ENCODE measurements at regions of chr16 and their contacts with region 1.

Region 1: DNA sequence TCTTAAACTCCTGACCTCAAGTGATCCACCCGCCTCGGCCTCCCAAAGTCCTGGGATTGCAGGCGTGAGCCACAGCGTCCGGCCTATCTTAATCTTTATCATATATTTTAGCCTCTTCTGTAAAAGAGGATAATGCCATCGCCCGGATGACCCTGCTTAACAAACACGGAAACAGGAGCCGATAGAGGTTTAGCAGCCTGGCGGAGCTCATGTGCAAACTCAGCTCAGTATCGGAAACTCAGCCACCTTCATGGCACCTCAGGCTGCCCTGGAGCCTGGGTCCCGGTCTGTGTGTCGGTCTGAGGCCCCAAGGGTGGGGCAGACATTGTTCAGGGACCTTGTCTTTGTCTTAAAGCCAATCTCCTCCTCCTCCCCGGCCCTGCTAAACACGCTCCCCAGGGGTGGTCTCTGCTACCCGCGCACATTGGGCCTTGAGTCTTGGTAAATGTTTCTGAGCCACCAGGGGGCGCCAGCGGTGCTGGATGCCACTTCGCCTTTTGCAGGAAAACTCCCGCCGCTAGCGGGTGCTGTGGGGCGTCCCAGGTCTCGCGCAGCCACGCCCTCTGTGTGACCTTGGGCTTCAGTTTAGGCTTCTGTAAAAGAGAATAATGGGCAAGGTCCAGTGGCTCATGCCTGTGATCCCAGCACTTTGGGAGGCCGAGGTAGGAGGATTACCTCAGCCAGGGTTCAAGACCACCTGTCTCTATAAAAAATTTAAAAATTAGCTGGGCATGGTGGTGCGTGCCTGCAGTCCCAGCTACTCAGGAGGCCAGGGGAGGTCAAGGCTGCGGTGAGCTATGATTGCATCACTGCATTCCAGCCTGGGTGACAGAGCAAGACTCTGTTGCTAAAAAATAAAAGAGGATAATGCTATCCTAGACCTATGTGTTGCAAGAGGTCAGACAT is 2.7 kb downstream of the CETP start:
- DNase-seq: peak; percentile 96
- H3K4me3 Mint-ChIP-seq: no peak overlapping the region
- H3K27ac Mint-ChIP-seq: no peak overlapping the region
- H3K4me1 Mint-ChIP-seq: peaks cover 19% of the 10 kb centered on the region
- H3K27me3 Mint-ChIP-seq: no peaks in the 10 kb centered on the region

Region 2: GRCh38 chr16:56974549-56975300 is 10.2 kb after region 1 on chr16:
- CTCF ChIA-PET with region 1: interaction called, 24 read pairs
- POLR2A ChIA-PET with region 1: interaction called, 4 read pairs
- DNase-seq: no peak
- H3K4me3 Mint-ChIP-seq: no peak overlapping the region
- H3K27ac Mint-ChIP-seq: no peak overlapping the region
- H3K4me1 Mint-ChIP-seq: peaks cover 20% of the 10 kb centered on the region
- H3K27me3 Mint-ChIP-seq: no peaks in the 10 kb centered on the region

Region 3: DNA sequence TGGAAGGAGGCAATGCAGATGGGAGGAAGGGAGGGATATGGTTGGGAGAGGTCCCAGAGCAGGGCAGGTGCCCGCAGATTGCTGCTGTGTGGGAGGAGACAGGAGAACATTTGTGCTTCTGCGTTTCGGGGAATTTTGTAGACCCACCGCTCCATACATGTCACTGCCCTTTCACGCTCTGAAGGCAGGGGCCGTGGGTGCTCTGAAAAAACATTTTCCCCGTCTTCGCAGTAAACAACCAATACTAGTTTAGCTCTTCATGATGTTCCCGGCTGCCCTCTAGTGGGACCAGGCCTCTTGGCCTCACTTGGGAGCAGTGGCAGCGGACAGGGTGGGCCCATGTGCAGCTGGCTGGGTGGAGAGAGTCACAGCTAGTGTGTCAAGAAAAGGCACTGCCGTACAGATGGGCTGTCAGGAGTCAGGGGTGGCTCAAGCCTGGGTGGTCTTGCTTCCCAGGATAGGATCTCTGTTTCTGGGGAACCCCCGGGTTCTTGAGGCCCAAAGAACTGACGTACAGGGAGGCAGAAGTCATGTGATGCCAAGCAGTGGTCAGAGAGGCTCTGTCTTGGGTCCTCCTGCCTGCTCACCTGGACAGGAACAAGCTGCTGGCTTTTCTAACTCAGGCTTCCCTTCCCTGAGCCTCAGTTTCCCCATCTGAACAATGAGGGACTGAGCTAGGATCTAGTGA is 81.3 kb after region 1 on chr16:
- CTCF ChIA-PET with region 1: interaction called, 42 read pairs
- POLR2A ChIA-PET with region 1: interaction called, 16 read pairs
- DNase-seq: no peak
- H3K4me3 Mint-ChIP-seq: no peak overlapping the region
- H3K27ac Mint-ChIP-seq: no peak overlapping the region
- H3K4me1 Mint-ChIP-seq: peaks cover 33% of the 10 kb centered on the region
- H3K27me3 Mint-ChIP-seq: no peaks in the 10 kb centered on the region

Region 4: DNA sequence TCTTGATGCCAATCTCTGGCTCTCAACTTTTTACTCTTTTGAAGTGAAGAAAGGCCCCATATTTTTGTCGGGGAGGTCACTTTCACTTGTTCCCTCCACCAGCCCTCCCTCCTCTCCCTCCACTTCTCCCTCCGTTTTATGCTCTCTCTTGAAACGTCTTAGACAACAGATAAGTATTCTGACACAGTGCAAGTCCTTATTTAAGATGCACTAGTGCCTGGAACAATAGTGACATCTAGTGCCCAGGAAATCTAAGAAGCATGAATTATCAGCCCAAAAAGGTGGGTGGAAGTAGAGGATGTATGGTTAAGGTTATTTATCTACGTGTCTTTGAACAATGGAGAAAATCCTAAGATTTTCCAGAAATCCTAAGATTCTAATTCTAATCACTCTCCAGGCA is 203.5 kb after region 1 on chr16:
- CTCF ChIA-PET with region 1: interaction called, 11 read pairs
- POLR2A ChIA-PET with region 1: no interaction called
- DNase-seq: no peak
- H3K4me3 Mint-ChIP-seq: no peak overlapping the region
- H3K27ac Mint-ChIP-seq: no peak overlapping the region
- H3K4me1 Mint-ChIP-seq: peaks cover 3% of the 10 kb centered on the region
- H3K27me3 Mint-ChIP-seq: no peaks in the 10 kb centered on the region